A673 (cell line): ENCODE measurements at regions of chr7 and their contacts with region 1.

Region 1: GRCh38 chr7:15015545-15016326 is 113.2 kb upstream of the DGKB start:
- DNase-seq: peak; percentile 75
- H3K4me3 ChIP-seq: no peak overlapping the region
- H3K27ac ChIP-seq: no peak overlapping the region
- H3K4me1 ChIP-seq: no peaks in the 10 kb centered on the region
- H3K27me3 ChIP-seq: no peaks in the 10 kb centered on the region
- CTCF ChIP-seq: peak; percentile 74

Region 2: GRCh38 chr7:14995774-14996173 is 20.0 kb before region 1 on chr7:
- CTCF ChIA-PET with region 1: interaction called, 14 read pairs
- POLR2A ChIA-PET with region 1: no interaction called
- intact Hi-C with region 1: no loop called
- DNase-seq: no peak
- H3K4me3 ChIP-seq: no peak overlapping the region
- H3K27ac ChIP-seq: no peak overlapping the region
- H3K4me1 ChIP-seq: no peaks in the 10 kb centered on the region
- H3K27me3 ChIP-seq: no peaks in the 10 kb centered on the region
- CTCF ChIP-seq: no peak